ENCODE measurements at regions of chr15 and their contacts with region 1.

Region 1: GRCh38 chr15:90716976-90717821 is at the start of gene BLM:
- DNase-seq: peak; percentile 96
- ATAC-seq: peak; percentile 100
- total RNA-seq, gene BLM: 13.8 to 14.9 TPM

Region 2: GRCh38 chr15:90519688-90520087 is 197.5 kb before region 1 on chr15:
- intact Hi-C with region 1: no loop called
- DNase-seq: no peak
- ATAC-seq: no peak

Region 3: DNA sequence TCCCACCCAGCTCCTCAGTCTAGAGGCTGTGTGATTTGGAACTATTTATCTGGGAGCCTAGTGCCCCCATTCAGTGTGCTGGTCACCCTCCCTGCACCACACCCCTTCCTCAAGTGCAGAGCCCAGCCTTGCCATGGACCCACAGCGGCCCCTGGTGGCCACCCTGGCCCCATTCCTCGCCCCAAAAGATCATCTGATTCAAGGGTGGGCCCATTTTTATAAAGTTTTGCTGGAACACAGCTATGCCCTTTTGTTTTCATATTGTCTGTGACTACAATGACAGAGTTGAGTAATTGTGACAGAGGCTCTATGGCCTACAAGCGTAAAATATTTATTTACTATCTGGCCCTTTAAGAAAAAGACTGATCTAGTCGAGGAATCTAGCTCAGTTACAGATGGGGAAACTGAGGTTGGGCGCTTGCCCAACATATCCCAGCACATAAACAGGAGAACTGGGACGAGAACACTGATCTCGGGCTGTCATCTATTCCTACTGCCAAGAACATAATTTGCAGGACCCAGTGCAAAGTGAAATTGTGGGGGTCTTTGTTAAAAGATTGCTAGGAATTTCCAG is 168.9 kb after region 1 on chr15:
- intact Hi-C with region 1: loop called in 1 of 2 experiments (anchors 5 kb)
- DNase-seq: peak; percentile 82
- ATAC-seq: peak; percentile 52 to 62

Measured in left cardiac atrium (tissue), 4 donors.